ENCODE measurements at regions of chrX and their contacts with region 1.

Region 1: DNA sequence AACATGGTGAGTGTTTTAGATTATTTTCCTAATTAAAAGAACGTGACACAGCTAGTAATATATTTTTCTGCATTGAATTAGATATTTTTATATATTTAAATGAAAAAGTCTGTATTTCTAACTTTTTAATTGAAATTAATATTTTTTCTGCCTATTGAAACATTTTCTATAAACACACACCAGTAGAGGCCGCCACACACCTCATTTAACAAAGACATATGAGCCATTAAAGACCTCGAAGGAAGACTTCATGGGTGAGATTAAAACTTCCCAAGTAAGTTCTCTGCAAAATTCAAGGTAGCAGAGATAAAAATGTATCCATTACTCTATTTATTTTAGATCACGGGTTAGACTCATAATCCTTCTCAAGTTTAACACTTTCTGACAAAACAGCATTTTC is 8.3 kb downstream of the SLITRK2 start:
- DNase-seq: peak in 1 of 10 donors; percentile 64
- H3K4me3 ChIP-seq: peak overlapping the region in 51 of 59 donors; percentile 2 to 72 (median 47)
- H3K27ac ChIP-seq: peak overlapping the region in 56 of 59 donors; percentile 16 to 90 (median 76)
- H3K27me3 ChIP-seq: peaks cover 0 to 67% (median 12%) of the 10 kb centered on the region in 45 donors
- CTCF ChIP-seq: peak in 55 of 56 donors; percentile 29 to 73 (median 53)

Region 2: GRCh38 chrX:145673841-145674240 is 152.1 kb before region 1 on chrX:
- intact Hi-C with region 1: loop called in 1 of 2 experiments (anchors 10 kb)
- DNase-seq: peak in 2 of 10 donors; percentile 2 to 30
- H3K4me3 ChIP-seq: no peak overlapping the region
- H3K27ac ChIP-seq: no peak overlapping the region
- H3K27me3 ChIP-seq: peaks cover 0 to 62% (median 9%) of the 10 kb centered on the region in 45 donors
- CTCF ChIP-seq: no peak

Region 3: DNA sequence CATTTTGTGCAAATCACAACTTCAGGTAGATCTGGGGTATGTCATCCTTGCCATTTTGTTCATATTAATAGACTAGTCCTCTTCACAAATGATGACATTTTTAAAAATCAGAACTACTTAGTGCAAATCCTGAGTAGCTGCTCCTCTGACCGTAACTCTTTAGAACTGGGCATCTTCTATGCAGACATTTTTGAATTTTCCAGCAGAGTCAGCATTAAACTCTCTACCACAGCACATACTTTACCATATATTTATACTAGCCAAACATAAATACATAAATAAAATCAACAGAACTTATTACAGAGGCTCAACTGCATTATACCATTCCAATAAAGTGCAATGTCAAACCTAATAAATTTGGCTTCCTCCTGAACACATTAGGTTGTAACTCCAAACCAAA is 12.8 kb before region 1 on chrX:
- intact Hi-C with region 1: no loop called
- DNase-seq: no peak
- H3K4me3 ChIP-seq: no peak overlapping the region
- H3K27ac ChIP-seq: no peak overlapping the region
- H3K27me3 ChIP-seq: peaks cover 0 to 39% (median 6%) of the 10 kb centered on the region in 45 donors
- CTCF ChIP-seq: no peak

Region 4: GRCh38 chrX:145923376-145923775 is 97.5 kb after region 1 on chrX:
- intact Hi-C with region 1: no loop called
- DNase-seq: no peak
- H3K4me3 ChIP-seq: no peak overlapping the region
- H3K27ac ChIP-seq: no peak overlapping the region
- H3K27me3 ChIP-seq: peaks cover 0 to 22% (median 0%) of the 10 kb centered on the region in 45 donors
- CTCF ChIP-seq: no peak

Region 5: DNA sequence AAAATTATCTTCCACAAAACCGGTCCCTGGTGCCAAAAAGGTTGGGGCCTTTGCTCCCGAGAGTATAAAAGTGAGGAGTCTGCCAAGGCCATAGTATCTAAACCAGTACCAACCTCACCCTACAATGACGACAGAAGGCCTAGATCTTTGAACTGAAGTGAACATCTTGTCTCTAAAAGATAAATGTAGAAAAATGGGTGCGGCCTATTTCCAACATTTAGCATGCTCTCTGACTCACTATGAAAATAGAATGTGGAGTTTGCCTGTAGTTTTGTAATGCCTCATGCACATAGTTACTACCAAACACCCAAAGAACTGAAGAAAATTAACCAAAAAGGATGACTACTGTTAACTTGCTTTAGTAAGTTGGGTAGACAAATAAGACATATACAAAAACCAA is 210.1 kb after region 1 on chrX:
- intact Hi-C with region 1: no loop called
- DNase-seq: no peak
- H3K4me3 ChIP-seq: no peak overlapping the region
- H3K27ac ChIP-seq: no peak overlapping the region
- H3K27me3 ChIP-seq: peaks cover 0 to 45% (median 6%) of the 10 kb centered on the region in 45 donors
- CTCF ChIP-seq: no peak